Activated CD8-positive, alpha-beta T cell treated with anti-CD3 and anti-CD28 coated beads for 36 hours (primary cell): ENCODE measurements at regions of chr16 and their contacts with region 1.

Region 1: DNA sequence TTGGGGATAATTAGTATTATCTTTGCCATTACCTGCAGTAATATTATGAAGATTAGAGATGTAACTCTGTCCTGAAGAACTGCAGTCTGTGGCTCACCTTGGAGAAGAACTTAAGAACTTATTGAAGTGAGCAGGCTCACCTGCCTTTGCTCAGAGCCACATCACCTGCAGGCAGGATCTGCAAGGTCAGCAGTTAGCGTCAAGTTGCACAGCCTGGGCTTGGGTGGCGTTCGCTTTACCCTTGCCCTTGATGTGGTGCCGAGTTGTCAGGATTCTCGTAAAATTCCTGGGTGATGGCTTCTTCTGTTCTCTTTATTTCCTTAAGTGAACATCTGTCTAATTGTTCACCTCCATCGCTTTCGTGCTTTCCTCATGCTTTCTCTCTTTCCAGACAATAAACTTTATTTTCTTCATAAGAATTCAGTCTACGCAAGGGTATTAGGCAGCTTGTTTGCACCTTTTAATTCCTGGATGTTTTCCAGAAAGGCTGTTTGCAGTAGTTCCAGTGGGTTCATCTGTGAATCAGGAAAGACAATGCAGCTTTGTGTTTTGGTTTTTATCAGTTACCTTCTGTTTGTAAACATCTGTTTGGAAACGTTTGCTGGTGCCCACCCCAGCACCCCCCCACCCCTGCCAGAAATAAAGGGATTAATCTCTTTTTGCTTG is 254.3 kb downstream of the WWOX start:
- DNase-seq: no peak
- ATAC-seq: no peak
- H3K4me3 Mint-ChIP-seq: no peak overlapping the region
- H3K27ac Mint-ChIP-seq: no peak overlapping the region
- H3K4me1 Mint-ChIP-seq: no peaks in the 10 kb centered on the region
- H3K27me3 Mint-ChIP-seq: no peaks in the 10 kb centered on the region
- CTCF ChIP-seq: no peak

Region 2: GRCh38 chr16:78333808-78334207 is 19.9 kb before region 1 on chr16:
- CTCF ChIA-PET with region 1: no interaction called
- POLR2A ChIA-PET with region 1: no interaction called
- intact Hi-C with region 1: loop called (anchors 1 kb)
- DNase-seq: no peak
- ATAC-seq: no peak
- H3K4me3 Mint-ChIP-seq: no peak overlapping the region
- H3K27ac Mint-ChIP-seq: no peak overlapping the region
- H3K4me1 Mint-ChIP-seq: no peaks in the 10 kb centered on the region
- H3K27me3 Mint-ChIP-seq: no peaks in the 10 kb centered on the region
- CTCF ChIP-seq: no peak